ENCODE measurements at regions of chr20 and their contacts with region 1.

Region 1: GRCh38 chr20:50120897-50121693 is 8.1 kb upstream of the UBE2V1 start:
- DNase-seq: peak; percentile 79
- H3K4me3 ChIP-seq: no peak overlapping the region
- H3K27ac ChIP-seq: no peak overlapping the region
- H3K4me1 ChIP-seq: no peaks in the 10 kb centered on the region
- H3K27me3 ChIP-seq: no peaks in the 10 kb centered on the region
- CTCF ChIP-seq: peak; percentile 67 to 93 (median 77)
- POLR2A ChIP-seq: no peak

Region 2: GRCh38 chr20:49846206-49846807 is 274.8 kb before region 1 on chr20:
- intact Hi-C with region 1: no loop called
- DNase-seq: peak; percentile 78
- H3K4me3 ChIP-seq: no peak overlapping the region
- H3K27ac ChIP-seq: no peak overlapping the region
- H3K4me1 ChIP-seq: peaks cover 16% of the 10 kb centered on the region
- H3K27me3 ChIP-seq: no peaks in the 10 kb centered on the region
- CTCF ChIP-seq: peak; percentile 56 to 70 (median 58)
- POLR2A ChIP-seq: no peak

Region 3: DNA sequence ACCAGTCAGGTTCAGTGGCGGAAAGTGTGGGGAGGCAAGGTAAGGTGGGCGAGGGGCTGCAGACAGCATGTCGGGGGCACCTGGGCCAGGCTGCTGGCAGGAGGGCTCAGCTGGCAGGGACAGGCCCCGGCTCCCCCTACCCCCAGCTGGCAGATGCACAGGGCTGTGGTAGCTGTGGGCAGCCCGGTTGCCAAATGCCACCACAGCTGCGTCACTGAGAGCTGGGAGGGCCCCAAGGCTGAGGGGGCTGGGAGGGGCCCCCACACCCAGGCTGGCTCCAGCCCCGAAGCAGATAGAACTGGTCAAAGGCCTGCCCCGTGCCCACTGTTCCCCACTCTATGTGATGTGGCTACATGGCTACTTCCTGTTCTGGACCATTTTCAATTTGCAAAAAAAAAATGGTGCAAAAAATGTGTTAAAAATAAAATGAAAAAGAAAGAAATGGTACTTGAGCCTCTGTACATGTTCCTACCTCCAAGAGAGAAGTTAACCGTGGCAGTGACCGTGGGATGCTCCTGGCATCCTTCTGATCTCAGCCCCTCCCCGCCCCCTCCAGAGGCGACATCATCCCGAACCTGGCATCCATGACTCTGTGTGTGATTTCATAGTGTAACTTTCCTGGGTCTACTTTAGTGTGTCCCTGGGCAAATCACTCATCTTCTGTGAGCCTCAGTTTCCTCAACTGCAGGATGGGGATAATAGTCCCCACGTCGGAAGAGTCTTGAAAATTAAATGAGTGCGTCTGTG is 72.5 kb before region 1 on chr20:
- intact Hi-C with region 1: no loop called
- DNase-seq: peak; percentile 28
- H3K4me3 ChIP-seq: no peak overlapping the region
- H3K27ac ChIP-seq: peak overlapping the region in 1 of 2 donors; percentile 24
- H3K4me1 ChIP-seq: peaks cover 11% of the 10 kb centered on the region
- H3K27me3 ChIP-seq: no peaks in the 10 kb centered on the region
- CTCF ChIP-seq: no peak
- POLR2A ChIP-seq: no peak

Region 4: GRCh38 chr20:50165684-50166554 is 44.8 kb after region 1 on chr20:
- intact Hi-C with region 1: loop called (anchors 5 kb)
- DNase-seq: peak; percentile 97
- H3K4me3 ChIP-seq: peak overlapping the region in 1 of 2 donors; percentile 15
- H3K27ac ChIP-seq: peak overlapping the region; percentile 75 to 86
- H3K4me1 ChIP-seq: peaks cover 13% of the 10 kb centered on the region
- H3K27me3 ChIP-seq: no peaks in the 10 kb centered on the region
- CTCF ChIP-seq: no peak
- POLR2A ChIP-seq: no peak